ENCODE measurements at regions of chr13 and their contacts with region 1.

Region 1: GRCh38 chr13:112443995-112444860 is 68.1 kb downstream of the SPACA7 start:
- DNase-seq: peak; percentile 32
- ATAC-seq: peak; percentile 91
- H3K4me3 ChIP-seq: no peak overlapping the region
- H3K27ac ChIP-seq: no peak overlapping the region
- H3K4me1 ChIP-seq: no peaks in the 10 kb centered on the region
- H3K27me3 ChIP-seq: no peaks in the 10 kb centered on the region
- CTCF ChIP-seq: peak; percentile 80

Region 2: DNA sequence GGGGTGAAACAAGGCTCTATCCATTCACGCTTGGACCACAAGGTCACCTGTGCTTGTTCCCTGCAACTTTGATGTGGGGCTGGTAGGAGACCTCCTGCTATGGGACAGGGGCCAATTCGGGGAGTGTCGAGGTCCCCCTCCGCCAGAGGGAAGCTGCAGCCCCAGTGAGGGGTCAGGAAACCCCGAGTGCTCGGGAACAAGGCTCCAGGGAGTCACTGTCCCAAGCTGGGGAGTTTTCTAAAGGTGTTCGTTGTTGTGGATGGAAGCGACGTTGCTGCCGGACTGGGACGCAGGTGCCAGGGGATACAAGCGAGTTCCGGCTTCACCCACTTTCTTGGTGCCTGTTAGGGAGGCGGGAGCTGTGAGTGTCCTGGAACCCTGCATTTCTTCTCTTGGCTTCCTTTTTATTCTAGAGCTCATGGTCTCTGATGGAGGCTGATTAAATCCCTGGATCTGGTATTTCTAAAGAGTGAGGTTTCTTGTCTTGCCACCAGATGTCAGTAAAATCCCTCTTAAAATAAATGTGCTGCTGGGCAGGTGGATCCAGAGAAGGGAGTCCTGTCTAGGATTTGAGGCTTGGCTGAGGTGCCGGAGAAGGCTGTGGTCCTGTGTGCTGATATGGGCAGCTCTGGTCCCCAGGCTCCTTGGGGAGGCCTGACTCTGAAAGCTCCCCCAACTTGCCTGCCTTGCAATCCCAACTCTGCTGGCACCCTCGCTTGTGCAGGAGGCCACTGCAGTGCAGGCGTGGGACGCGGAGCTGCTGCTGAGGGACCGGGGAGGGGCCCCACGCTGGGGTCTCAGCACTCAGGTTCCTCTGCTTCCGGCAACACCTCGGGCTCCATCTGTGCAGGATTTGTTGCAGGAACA is 969.9 kb before region 1 on chr13:
- CTCF ChIA-PET with region 1: interaction called, 3 read pairs
- POLR2A ChIA-PET with region 1: no interaction called
- in situ Hi-C with region 1: no loop called
- intact Hi-C with region 1: loop called (anchors 5 kb)
- DNase-seq: peak; percentile 2
- ATAC-seq: peak; percentile 73; the same call in 1 of the 2 replicates
- H3K4me3 ChIP-seq: no peak overlapping the region
- H3K27ac ChIP-seq: no peak overlapping the region
- H3K4me1 ChIP-seq: no peaks in the 10 kb centered on the region
- H3K27me3 ChIP-seq: no peaks in the 10 kb centered on the region
- CTCF ChIP-seq: no peak; the same call in 1 of the 2 replicates

Region 3: GRCh38 chr13:112350300-112350699 is 93.9 kb before region 1 on chr13:
- CTCF ChIA-PET with region 1: no interaction called
- POLR2A ChIA-PET with region 1: no interaction called
- in situ Hi-C with region 1: no loop called
- intact Hi-C with region 1: loop called (anchors 10 kb)
- DNase-seq: no peak
- ATAC-seq: no peak
- H3K4me3 ChIP-seq: no peak overlapping the region
- H3K27ac ChIP-seq: no peak overlapping the region
- H3K4me1 ChIP-seq: no peaks in the 10 kb centered on the region
- H3K27me3 ChIP-seq: no peaks in the 10 kb centered on the region; the same call in 1 of the 2 replicates
- CTCF ChIP-seq: no peak

Measured in Panc1 (cell line).